ENCODE measurements at regions of chr7 and their contacts with region 1.

Region 1: GRCh38 chr7:135147899-135148721 is at the start of gene TMEM140:
- DNase-seq: peak; percentile 90
- ATAC-seq: peak; percentile 78
- H3K4me3 ChIP-seq: peak within 1 kb of the TSS; percentile 67
- H3K27ac ChIP-seq: peak within 1 kb of the TSS; percentile 73
- H3K4me1 ChIP-seq: peaks cover 27% of the 10 kb centered on the region
- H3K27me3 ChIP-seq: no peaks in the 10 kb centered on the region
- CTCF ChIP-seq: no peak
- EP300 ChIP-seq: peak; percentile 86 to 89; a peak in 3 of 4 replicates
- POLR2A ChIP-seq: peak; percentile 82
- RAD21 ChIP-seq: 0 out of 2 replicates have a peak, but pooled peaks have one; percentile 2
- polyA plus RNA-seq, gene TMEM140: 0.85 to 1.1 TPM

Region 2: GRCh38 chr7:134992626-134993179 is 155.4 kb before region 1 on chr7:
- CTCF ChIA-PET with region 1: interaction called, 69 read pairs
- POLR2A ChIA-PET with region 1: interaction called, 121 read pairs
- RAD21 ChIA-PET with region 1: interaction called, 154 read pairs
- SMC1A ChIA-PET with region 1: interaction called, 293 read pairs
- in situ Hi-C with region 1: no loop called
- intact Hi-C with region 1: loop called (anchors 1 kb)
- DNase-seq: peak; percentile 96
- ATAC-seq: peak; percentile 67
- H3K4me3 ChIP-seq: peak overlapping the region; percentile 32; the same call in 1 of the 2 replicates
- H3K27ac ChIP-seq: peak overlapping the region; percentile 99
- H3K4me1 ChIP-seq: peaks cover 61% of the 10 kb centered on the region
- H3K27me3 ChIP-seq: no peaks in the 10 kb centered on the region
- CTCF ChIP-seq: no peak
- EP300 ChIP-seq: peak; percentile 86 to 95
- POLR2A ChIP-seq: peak; percentile 77
- RAD21 ChIP-seq: no peak

Region 3: DNA sequence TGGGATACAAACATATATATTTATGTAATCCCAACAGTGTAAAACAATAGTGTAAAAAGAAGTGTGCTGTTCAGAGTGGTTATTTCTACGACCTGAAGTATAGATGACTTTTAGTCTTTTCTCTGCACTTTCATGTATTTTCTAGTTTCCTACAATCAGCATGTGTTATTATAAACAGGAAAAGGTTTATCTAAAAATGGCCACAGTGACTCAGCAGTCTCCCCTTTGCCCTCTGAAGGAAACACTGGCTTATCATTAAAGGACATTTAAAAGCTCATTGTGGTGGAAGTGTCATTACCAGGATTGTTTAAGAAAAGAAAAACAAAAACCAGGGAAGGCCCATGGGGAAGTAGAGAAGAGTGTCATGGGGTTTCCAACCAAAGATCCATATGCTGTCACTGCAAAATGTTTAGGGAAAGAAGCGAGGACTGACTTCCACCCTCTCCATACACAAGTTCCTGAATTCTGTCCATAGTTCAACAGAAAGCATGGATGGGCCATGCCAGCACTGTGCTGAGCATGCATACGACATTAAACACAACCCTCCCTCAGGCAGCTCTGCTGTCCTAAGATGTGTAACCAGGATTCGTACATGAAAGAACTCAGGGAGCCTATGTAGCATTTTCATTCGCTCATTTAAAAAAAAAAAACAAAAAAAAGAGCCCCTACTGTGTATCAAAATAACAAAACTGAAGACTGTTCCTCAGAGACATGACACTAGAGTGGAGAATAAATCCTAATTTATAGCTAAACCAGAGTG is 12.2 kb after region 1 on chr7:
- CTCF ChIA-PET with region 1: interaction called, 20 read pairs
- POLR2A ChIA-PET with region 1: interaction called, 169 read pairs
- RAD21 ChIA-PET with region 1: interaction called, 84 read pairs
- SMC1A ChIA-PET with region 1: interaction called, 158 read pairs
- in situ Hi-C with region 1: no loop called
- intact Hi-C with region 1: no loop called
- DNase-seq: no peak
- ATAC-seq: peak; percentile 59
- H3K4me3 ChIP-seq: no peak overlapping the region; the same call in 1 of the 2 replicates
- H3K27ac ChIP-seq: peak overlapping the region; percentile 84
- H3K4me1 ChIP-seq: peaks cover 32% of the 10 kb centered on the region
- H3K27me3 ChIP-seq: no peaks in the 10 kb centered on the region
- CTCF ChIP-seq: no peak
- EP300 ChIP-seq: peak in 1 of 2 experiments; percentile 15; a peak in 1 of 4 replicates
- POLR2A ChIP-seq: no peak; the same call in 1 of the 2 replicates
- RAD21 ChIP-seq: no peak

Region 4: DNA sequence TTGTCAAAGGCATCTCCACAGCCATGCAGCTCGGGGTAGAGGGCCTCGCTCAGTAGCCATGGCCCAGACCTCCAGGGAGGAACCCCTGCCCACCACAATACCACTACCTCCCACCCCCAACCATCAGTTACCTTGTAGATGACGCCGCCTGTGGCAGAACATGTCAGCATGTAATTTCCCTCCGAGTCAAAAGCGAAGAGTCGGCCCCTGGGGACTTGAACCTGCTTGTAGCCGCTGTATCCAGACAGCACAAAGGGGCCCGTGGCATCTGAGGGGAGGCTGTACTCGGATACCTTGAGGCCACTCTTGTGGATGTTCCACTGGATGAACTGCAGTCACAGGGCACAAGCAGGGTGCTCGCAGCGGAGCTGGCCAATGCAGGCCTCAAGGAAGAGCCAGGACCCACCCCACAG is 38.7 kb after region 1 on chr7:
- CTCF ChIA-PET with region 1: interaction called, 4 read pairs
- POLR2A ChIA-PET with region 1: interaction called, 18 read pairs
- RAD21 ChIA-PET with region 1: interaction called, 12 read pairs
- SMC1A ChIA-PET with region 1: interaction called, 26 read pairs
- in situ Hi-C with region 1: no loop called
- intact Hi-C with region 1: no loop called
- DNase-seq: no peak
- ATAC-seq: peak; percentile 77
- H3K4me3 ChIP-seq: peak overlapping the region; percentile 25; the same call in 1 of the 2 replicates
- H3K27ac ChIP-seq: peak overlapping the region; percentile 58
- H3K4me1 ChIP-seq: peaks cover 33% of the 10 kb centered on the region
- H3K27me3 ChIP-seq: no peaks in the 10 kb centered on the region
- CTCF ChIP-seq: peak in 1 of 3 experiments; percentile 24; a peak in 1 of 6 replicates
- EP300 ChIP-seq: peak; percentile 94 to 95; a peak in 3 of 4 replicates
- POLR2A ChIP-seq: peak; percentile 65
- RAD21 ChIP-seq: peak; percentile 27; the same call in 1 of the 2 replicates